Activated naive CD8-positive, alpha-beta T cell treated with anti-CD3 and anti-CD28 coated beads, Interleukin-2, amount 10 ng/mL, durations not matched to agents 7 days and 5 days (primary cell): ENCODE measurements at regions of chr20 and their contacts with region 1.

Region 1: GRCh38 chr20:41161886-41162285 is 24.5 kb downstream of the PLCG1 start:
- DNase-seq: no peak
- ATAC-seq: no peak
- H3K4me3 Mint-ChIP-seq: peak overlapping the region; percentile 62
- H3K27ac Mint-ChIP-seq: peak overlapping the region; percentile 76
- H3K4me1 Mint-ChIP-seq: peaks cover 72% of the 10 kb centered on the region
- H3K27me3 Mint-ChIP-seq: no peaks in the 10 kb centered on the region

Region 2: DNA sequence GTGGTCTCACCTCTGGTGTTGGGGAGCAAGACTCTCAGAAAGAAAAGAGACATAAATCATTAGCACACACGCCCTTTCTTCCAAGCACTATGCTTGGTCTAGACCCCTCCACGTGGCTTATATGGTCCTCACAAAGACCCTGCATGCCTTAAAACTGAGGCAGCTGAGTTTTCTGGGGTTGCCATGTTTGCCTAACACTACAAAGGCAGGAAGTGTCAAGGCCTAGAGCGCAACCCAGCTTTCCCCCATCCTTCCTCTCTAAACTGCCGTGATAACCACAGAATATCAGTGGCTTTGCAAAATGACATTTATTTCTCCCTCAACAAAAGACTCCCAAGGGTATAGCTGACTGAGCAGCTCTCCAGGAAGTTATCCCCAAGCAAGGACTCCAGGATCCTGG is 279.7 kb before region 1 on chr20:
- POLR2A ChIA-PET with region 1: interaction called, 12 read pairs
- DNase-seq: peak; percentile 38
- ATAC-seq: peak; percentile 70
- H3K4me3 Mint-ChIP-seq: peak overlapping the region; percentile 66
- H3K27ac Mint-ChIP-seq: peak overlapping the region; percentile 92
- H3K4me1 Mint-ChIP-seq: peaks cover 39% of the 10 kb centered on the region
- H3K27me3 Mint-ChIP-seq: peaks cover 2% of the 10 kb centered on the region

Region 3: DNA sequence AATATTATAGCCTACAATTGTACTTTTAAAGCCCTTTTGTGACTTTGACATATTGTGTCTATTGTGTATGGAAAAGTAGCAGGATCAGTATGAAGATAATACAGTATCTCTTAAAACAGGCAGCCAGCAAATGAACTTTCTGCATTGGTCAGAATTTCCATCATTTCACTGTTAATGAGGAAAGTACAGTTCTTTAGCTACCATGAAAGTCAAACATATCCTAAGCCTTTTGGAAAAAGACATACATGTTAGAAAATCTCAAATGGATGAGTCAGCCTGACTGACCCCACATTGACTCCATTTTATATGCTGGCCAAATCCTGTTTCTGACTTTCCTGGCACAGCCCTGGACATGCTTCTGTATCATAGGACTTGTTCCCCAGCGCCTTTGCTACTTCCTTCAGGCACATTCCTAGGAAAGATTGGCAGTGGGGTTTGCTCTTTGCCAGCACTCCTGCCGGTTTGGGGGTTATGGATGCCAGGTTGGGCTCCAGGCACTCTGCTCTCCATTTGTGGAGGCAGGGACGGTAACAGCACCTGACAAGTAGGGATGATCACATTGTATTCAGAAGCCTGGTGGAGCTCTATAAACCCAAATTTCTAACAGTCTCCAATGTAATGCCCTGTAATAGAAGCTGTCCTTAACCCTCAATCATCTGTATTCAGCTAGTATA is 89.6 kb before region 1 on chr20:
- POLR2A ChIA-PET with region 1: no interaction called
- DNase-seq: no peak
- ATAC-seq: no peak
- H3K4me3 Mint-ChIP-seq: peak overlapping the region; percentile 15
- H3K27ac Mint-ChIP-seq: no peak overlapping the region
- H3K4me1 Mint-ChIP-seq: peaks cover 64% of the 10 kb centered on the region
- H3K27me3 Mint-ChIP-seq: no peaks in the 10 kb centered on the region

Region 4: GRCh38 chr20:41086402-41087338 is 75.2 kb before region 1 on chr20:
- POLR2A ChIA-PET with region 1: no interaction called
- DNase-seq: no peak
- ATAC-seq: no peak
- H3K4me3 Mint-ChIP-seq: peak overlapping the region; percentile 20
- H3K27ac Mint-ChIP-seq: peak overlapping the region; percentile 61
- H3K4me1 Mint-ChIP-seq: peaks cover 17% of the 10 kb centered on the region
- H3K27me3 Mint-ChIP-seq: no peaks in the 10 kb centered on the region

Region 5: GRCh38 chr20:41173161-41173721 is 11.4 kb after region 1 on chr20:
- POLR2A ChIA-PET with region 1: interaction called, 36 read pairs
- DNase-seq: peak; percentile 77
- ATAC-seq: peak; percentile 71
- H3K4me3 Mint-ChIP-seq: no peak overlapping the region
- H3K27ac Mint-ChIP-seq: peak overlapping the region; percentile 59
- H3K4me1 Mint-ChIP-seq: peaks cover 33% of the 10 kb centered on the region
- H3K27me3 Mint-ChIP-seq: no peaks in the 10 kb centered on the region

Region 6: DNA sequence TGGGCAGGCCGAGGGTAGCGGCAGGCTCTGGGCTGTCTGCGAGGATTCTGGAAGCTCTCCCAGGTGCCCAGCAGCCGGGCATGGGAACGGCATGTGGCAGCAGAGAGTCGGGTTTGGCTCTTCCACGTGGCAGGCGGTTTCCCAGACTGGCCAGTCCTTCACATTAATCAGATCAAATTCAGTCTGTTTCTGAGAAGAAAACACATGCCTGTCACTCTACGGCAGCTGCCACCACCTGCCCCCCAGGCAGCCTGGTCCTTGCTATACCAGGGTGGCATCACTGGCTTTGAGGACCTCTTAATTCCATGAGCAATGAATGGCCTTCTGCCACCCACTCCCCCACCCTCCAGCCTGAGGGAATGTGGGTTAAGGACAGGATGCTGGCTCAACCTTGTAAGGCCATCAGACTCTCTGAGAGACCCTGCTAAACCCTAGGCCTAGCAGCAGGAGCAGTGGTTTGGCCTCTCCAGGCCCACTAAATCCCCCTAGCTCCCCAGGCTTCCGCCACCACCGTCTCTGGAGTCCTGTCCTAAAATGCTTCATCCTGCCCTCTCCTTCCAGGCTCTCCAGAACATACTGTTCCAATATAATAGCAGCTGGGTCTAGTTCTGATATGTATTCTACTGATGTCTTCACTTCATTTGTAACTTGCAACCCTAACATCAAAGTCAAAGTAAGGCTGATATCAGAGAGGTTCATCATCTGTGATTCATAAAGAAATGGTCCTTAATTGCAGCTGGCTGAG is 23.3 kb after region 1 on chr20:
- POLR2A ChIA-PET with region 1: no interaction called
- DNase-seq: peak; percentile 25
- ATAC-seq: no peak
- H3K4me3 Mint-ChIP-seq: no peak overlapping the region
- H3K27ac Mint-ChIP-seq: no peak overlapping the region
- H3K4me1 Mint-ChIP-seq: peaks cover 12% of the 10 kb centered on the region
- H3K27me3 Mint-ChIP-seq: no peaks in the 10 kb centered on the region